ENCODE measurements at regions of chr20 and their contacts with region 1.

Region 1: GRCh38 chr20:23655491-23656211 is 17.9 kb upstream of the CST3 start:
- H3K4me3 Mint-ChIP-seq: peak overlapping the region; percentile 73
- H3K27ac Mint-ChIP-seq: peak overlapping the region; percentile 92
- H3K4me1 Mint-ChIP-seq: peaks cover 78% of the 10 kb centered on the region
- H3K27me3 Mint-ChIP-seq: no peaks in the 10 kb centered on the region

Region 2: GRCh38 chr20:22346716-22347115 is 1308.9 kb before region 1 on chr20:
- intact Hi-C with region 1: no loop called
- H3K4me3 Mint-ChIP-seq: no peak overlapping the region
- H3K27ac Mint-ChIP-seq: no peak overlapping the region
- H3K4me1 Mint-ChIP-seq: peaks cover 10% of the 10 kb centered on the region
- H3K27me3 Mint-ChIP-seq: no peaks in the 10 kb centered on the region

Region 3: GRCh38 chr20:23596579-23597250 is 58.9 kb before region 1 on chr20:
- intact Hi-C with region 1: no loop called
- H3K4me3 Mint-ChIP-seq: no peak overlapping the region
- H3K27ac Mint-ChIP-seq: no peak overlapping the region
- H3K4me1 Mint-ChIP-seq: no peaks in the 10 kb centered on the region
- H3K27me3 Mint-ChIP-seq: peaks cover 3% of the 10 kb centered on the region

Region 4: DNA sequence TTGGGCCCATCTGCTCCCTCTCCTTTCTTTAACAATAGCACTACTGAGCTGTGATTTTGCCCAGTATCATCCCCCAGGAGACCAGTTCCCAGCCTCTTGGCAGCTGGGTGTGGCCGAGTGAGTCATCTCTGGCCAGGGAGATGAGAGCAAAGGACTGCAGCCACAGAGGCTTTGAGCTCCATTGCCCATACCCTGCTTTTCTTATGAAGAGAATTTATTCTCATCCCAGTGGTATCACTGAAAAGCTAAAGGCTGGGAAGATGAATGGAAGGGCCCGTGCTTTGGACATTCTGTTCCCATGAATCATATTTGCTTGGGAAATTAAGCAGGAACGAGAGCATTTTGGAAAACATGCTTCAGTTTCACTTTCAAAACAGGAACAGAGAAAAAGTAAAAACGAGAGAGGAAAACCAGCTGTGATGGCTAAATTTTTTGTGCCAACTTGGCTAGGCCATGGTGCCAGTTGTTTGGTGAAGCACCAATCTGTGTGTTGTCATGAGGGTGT is 32.8 kb before region 1 on chr20:
- intact Hi-C with region 1: loop called (anchors 5 kb)
- H3K4me3 Mint-ChIP-seq: peak overlapping the region; percentile 60
- H3K27ac Mint-ChIP-seq: peak overlapping the region; percentile 95
- H3K4me1 Mint-ChIP-seq: peaks cover 74% of the 10 kb centered on the region
- H3K27me3 Mint-ChIP-seq: peaks cover 16% of the 10 kb centered on the region

Region 5: GRCh38 chr20:23643659-23644058 is 12.0 kb before region 1 on chr20:
- intact Hi-C with region 1: loop called (anchors 1 kb)
- H3K4me3 Mint-ChIP-seq: peak overlapping the region; percentile 60
- H3K27ac Mint-ChIP-seq: peak overlapping the region; percentile 94
- H3K4me1 Mint-ChIP-seq: peaks cover 87% of the 10 kb centered on the region
- H3K27me3 Mint-ChIP-seq: no peaks in the 10 kb centered on the region

Measured in dendritic cell treated with granulocyte-macrophage colony-stimulating factor and Interleukin-4, amounts not matched to agents 40 ng/mL and 50 ng/mL, for 4 days (primary cell).